ENCODE measurements at regions of chr12 and their contacts with region 1.

Region 1: DNA sequence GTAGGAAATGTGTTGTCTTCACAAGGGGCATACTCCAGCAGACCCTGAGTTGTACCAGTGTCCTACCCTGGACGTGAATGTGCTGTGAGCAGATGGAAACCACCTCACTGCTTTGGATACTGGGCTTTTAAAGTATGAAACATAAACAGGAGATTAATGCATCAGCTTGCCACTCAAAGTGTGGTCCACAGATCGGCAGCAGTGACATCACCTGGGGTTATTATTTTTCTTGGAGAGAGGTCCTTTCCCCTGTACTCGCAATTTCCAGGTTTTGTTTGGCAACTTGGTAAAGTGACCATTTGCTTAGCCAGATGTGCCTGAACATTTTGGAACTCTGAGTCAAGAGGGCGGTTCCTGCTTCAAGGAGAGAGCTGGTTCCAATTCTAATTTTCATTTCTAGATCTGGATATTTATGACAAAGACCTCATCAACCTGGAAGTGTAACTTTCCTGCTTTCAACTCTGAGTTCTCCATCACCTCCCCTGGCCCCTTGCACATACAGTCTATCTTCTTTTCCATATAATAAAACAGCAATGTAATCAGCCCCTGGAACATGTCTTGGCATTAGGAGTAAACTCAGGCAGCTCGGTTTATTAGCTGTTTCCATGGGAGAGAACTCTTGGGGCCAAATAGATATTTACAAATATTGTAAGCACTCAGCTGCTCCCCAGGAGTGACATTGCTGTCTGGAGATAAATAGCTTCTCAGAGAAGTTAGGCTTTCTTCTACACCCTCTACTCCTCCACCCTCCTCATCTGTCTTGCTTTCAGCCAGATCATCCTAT is 237.0 kb upstream of the TBX3 start:
- DNase-seq: no peak
- ATAC-seq: no peak
- H3K4me3 Mint-ChIP-seq: no peak overlapping the region
- H3K27ac Mint-ChIP-seq: no peak overlapping the region
- H3K4me1 Mint-ChIP-seq: no peaks in the 10 kb centered on the region
- H3K27me3 Mint-ChIP-seq: no peaks in the 10 kb centered on the region

Region 2: DNA sequence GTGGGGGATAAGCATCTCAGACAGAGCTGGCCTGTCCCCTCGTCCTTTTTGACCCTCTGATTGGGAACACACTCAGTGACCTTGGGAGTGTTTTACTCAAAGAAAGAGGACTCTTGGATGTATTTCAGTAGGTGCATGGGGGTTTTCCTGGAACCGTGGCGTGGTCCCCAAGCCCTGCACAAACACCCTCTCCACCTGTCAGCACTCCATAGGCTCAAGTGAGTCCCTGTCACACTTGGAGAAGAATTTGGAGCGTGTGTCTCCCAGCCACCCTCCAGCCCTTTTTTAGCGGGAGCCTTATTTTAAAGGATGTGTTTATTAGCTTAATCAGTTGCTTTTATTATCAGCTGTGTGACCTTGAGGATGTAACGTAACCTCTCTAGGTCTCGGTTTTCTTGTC is 199.7 kb before region 1 on chr12:
- CTCF ChIA-PET with region 1: no interaction called
- POLR2A ChIA-PET with region 1: interaction called, 11 read pairs
- intact Hi-C with region 1: no loop called
- DNase-seq: no peak
- ATAC-seq: no peak
- H3K4me3 Mint-ChIP-seq: no peak overlapping the region
- H3K27ac Mint-ChIP-seq: no peak overlapping the region
- H3K4me1 Mint-ChIP-seq: no peaks in the 10 kb centered on the region
- H3K27me3 Mint-ChIP-seq: peaks cover 3% of the 10 kb centered on the region

Measured in activated CD4-positive, alpha-beta T cell treated with anti-CD3 and anti-CD28 coated beads for 36 hours (primary cell).